ENCODE measurements at regions of chr2 and their contacts with region 1.

Region 1: GRCh38 chr2:7427293-7428060 is 510.3 kb downstream of the RNF144A start:
- DNase-seq: peak in 6 of 14 experiments; percentile 5 to 81 (median 58)
- ATAC-seq: peak; percentile 60
- H3K4me3 ChIP-seq: no peak overlapping the region
- H3K4me3 Mint-ChIP-seq: no peak overlapping the region
- H3K27ac ChIP-seq: no peak overlapping the region
- H3K27ac Mint-ChIP-seq: peak overlapping the region; percentile 22
- H3K4me1 ChIP-seq: peaks cover 36% of the 10 kb centered on the region
- H3K4me1 Mint-ChIP-seq: peaks cover 45% of the 10 kb centered on the region
- H3K27me3 ChIP-seq: no peaks in the 10 kb centered on the region
- H3K27me3 Mint-ChIP-seq: no peaks in the 10 kb centered on the region
- CTCF ChIP-seq: peak; percentile 87

Region 2: GRCh38 chr2:7097348-7097895 is 330.1 kb before region 1 on chr2:
- CTCF ChIA-PET with region 1: no interaction called
- POLR2A ChIA-PET with region 1: no interaction called
- intact Hi-C with region 1: loop called in 1 of 2 experiments (anchors 10 kb)
- DNase-seq: peak; percentile 44 to 86 (median 66)
- ATAC-seq: peak; percentile 97
- H3K4me3 ChIP-seq: peak overlapping the region; percentile 6
- H3K4me3 Mint-ChIP-seq: peak overlapping the region; percentile 42
- H3K27ac ChIP-seq: no peak overlapping the region
- H3K27ac Mint-ChIP-seq: no peak overlapping the region
- H3K4me1 ChIP-seq: peaks cover 9% of the 10 kb centered on the region
- H3K4me1 Mint-ChIP-seq: peaks cover 7% of the 10 kb centered on the region
- H3K27me3 ChIP-seq: no peaks in the 10 kb centered on the region
- H3K27me3 Mint-ChIP-seq: no peaks in the 10 kb centered on the region
- CTCF ChIP-seq: peak; percentile 99

Region 3: DNA sequence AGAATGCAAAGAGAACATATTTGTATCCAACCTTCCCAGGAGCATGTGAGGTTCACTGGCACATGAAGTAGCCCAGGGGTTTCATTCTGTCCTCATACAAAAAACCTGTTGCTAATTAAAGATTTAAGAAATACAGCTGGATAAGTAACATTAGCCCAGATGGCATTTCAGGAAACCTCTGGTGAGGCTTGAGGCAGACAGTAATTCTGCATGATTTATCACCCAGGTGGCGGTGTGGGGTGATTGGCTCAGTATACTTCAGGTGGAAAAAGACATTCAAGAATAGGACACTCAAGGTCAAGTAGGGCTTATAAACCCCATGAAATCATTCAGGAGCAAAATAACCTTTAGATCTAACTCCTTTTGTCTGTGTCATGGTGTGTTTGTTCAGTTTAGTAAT is 272.8 kb before region 1 on chr2:
- CTCF ChIA-PET with region 1: no interaction called
- POLR2A ChIA-PET with region 1: no interaction called
- intact Hi-C with region 1: no loop called
- DNase-seq: no peak
- ATAC-seq: no peak
- H3K4me3 ChIP-seq: no peak overlapping the region
- H3K4me3 Mint-ChIP-seq: no peak overlapping the region
- H3K27ac ChIP-seq: no peak overlapping the region
- H3K27ac Mint-ChIP-seq: no peak overlapping the region
- H3K4me1 ChIP-seq: no peaks in the 10 kb centered on the region
- H3K4me1 Mint-ChIP-seq: no peaks in the 10 kb centered on the region
- H3K27me3 ChIP-seq: peaks cover 0 to 3% of the 10 kb centered on the region in 2 experiments
- H3K27me3 Mint-ChIP-seq: no peaks in the 10 kb centered on the region
- CTCF ChIP-seq: no peak

Region 4: DNA sequence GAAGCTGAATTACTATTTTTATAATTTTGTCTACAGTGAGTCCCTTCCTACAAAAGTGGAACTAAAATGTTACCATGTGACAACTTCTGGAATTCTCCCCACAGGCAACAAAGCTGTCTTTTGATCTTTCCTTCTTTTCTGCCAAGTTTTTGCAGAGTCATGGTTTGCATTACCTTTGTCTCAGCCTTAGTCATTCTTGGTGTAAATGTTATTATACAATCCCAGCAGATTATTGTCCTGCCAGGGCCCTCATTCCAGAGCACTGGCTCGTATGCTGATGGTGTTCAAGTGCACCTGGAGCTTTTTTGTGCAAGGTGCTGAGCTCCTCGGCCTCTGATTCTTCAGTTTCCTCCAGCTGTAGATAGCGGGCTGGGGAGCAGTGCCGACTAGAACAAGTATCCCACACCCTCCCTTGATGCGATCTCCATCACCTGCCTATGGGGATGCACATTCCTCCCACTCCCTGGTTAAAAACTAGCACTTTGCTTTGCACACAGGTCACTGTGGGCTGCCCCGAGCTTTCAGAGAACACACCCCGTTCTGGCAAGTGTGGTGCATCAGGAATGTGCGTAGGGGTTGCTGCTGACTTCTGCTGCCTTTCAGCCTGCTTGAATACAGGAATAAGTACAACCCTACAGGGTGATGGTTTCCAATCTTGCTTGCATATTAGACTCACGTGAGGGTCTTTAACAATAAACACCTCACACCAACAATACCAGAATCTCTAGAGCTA is 246.7 kb before region 1 on chr2:
- CTCF ChIA-PET with region 1: no interaction called
- POLR2A ChIA-PET with region 1: no interaction called
- intact Hi-C with region 1: no loop called
- DNase-seq: no peak
- ATAC-seq: no peak
- H3K4me3 ChIP-seq: no peak overlapping the region
- H3K4me3 Mint-ChIP-seq: no peak overlapping the region
- H3K27ac ChIP-seq: no peak overlapping the region
- H3K27ac Mint-ChIP-seq: no peak overlapping the region
- H3K4me1 ChIP-seq: no peaks in the 10 kb centered on the region
- H3K4me1 Mint-ChIP-seq: no peaks in the 10 kb centered on the region
- H3K27me3 ChIP-seq: no peaks in the 10 kb centered on the region
- H3K27me3 Mint-ChIP-seq: no peaks in the 10 kb centered on the region
- CTCF ChIP-seq: no peak

Region 5: GRCh38 chr2:7450188-7450832 is 22.8 kb after region 1 on chr2:
- CTCF ChIA-PET with region 1: no interaction called
- POLR2A ChIA-PET with region 1: interaction called, 6 read pairs
- intact Hi-C with region 1: loop called in 1 of 2 experiments (anchors 2 kb)
- DNase-seq: peak in 7 of 14 experiments; percentile 23 to 76 (median 54)
- ATAC-seq: peak; percentile 81
- H3K4me3 ChIP-seq: no peak overlapping the region
- H3K4me3 Mint-ChIP-seq: peak overlapping the region; percentile 81
- H3K27ac ChIP-seq: peak overlapping the region; percentile 44 to 68
- H3K27ac Mint-ChIP-seq: peak overlapping the region; percentile 89
- H3K4me1 ChIP-seq: peaks cover 54% of the 10 kb centered on the region
- H3K4me1 Mint-ChIP-seq: peaks cover 73% of the 10 kb centered on the region
- H3K27me3 ChIP-seq: no peaks in the 10 kb centered on the region
- H3K27me3 Mint-ChIP-seq: no peaks in the 10 kb centered on the region
- CTCF ChIP-seq: no peak

Region 6: DNA sequence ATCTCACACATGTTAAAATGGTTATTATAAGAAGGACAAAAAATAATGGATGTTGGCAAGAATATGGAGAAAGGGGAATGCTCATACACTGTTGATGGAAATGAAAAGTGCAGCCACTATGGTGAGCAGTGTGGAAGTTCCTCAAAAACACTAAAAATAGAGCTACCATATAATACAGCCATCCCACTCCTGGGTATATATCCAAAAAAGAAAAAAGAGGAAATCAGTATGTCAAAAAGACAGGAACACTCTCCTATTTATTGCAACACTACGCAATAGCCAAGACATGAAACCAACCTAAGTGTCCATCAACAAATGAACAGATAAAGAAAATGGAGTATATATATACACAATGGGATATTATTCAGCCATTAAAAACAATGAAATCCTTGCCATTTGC is 132.3 kb after region 1 on chr2:
- CTCF ChIA-PET with region 1: no interaction called
- POLR2A ChIA-PET with region 1: no interaction called
- intact Hi-C with region 1: loop called (anchors 5 to 10 kb)
- DNase-seq: no peak
- ATAC-seq: no peak
- H3K4me3 ChIP-seq: no peak overlapping the region
- H3K4me3 Mint-ChIP-seq: no peak overlapping the region
- H3K27ac ChIP-seq: no peak overlapping the region
- H3K27ac Mint-ChIP-seq: no peak overlapping the region
- H3K4me1 ChIP-seq: no peaks in the 10 kb centered on the region
- H3K4me1 Mint-ChIP-seq: no peaks in the 10 kb centered on the region
- H3K27me3 ChIP-seq: no peaks in the 10 kb centered on the region
- H3K27me3 Mint-ChIP-seq: no peaks in the 10 kb centered on the region
- CTCF ChIP-seq: no peak

Region 7: DNA sequence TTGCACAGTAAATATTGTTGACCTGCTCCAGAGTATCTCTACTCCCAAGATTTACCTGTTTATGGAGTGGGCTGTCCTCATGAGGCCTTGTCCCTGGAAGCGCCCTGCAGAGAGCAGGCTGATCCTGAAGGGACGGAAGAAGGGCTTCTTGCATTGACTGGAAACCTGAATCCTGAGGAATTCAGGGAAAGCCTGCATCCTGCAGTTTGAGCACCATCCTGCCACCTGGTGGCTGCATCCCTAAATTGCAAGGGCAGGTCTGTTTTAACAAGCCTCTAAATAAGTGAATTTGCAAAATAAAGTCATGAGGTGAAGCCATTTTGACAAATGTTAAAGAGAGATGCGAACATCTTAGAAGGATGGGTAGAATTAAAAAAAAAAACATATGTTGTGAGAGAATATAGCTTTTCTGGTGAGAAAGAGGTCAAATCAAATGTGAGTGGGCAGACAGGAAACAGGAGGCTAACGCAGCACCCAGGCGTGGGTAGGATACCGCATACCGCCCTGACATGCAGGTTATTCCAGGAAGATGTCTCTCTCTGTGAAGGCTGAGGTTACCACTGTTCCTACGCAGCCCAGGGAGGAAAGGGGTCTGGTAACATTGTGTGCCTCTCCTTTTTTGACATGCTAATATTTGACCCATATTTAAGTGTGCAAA is 244.7 kb after region 1 on chr2:
- CTCF ChIA-PET with region 1: interaction called, 3 read pairs
- POLR2A ChIA-PET with region 1: no interaction called
- intact Hi-C with region 1: loop called (anchors 1 to 2 kb)
- DNase-seq: peak; percentile 5 to 75 (median 39)
- ATAC-seq: peak; percentile 44
- H3K4me3 ChIP-seq: no peak overlapping the region
- H3K4me3 Mint-ChIP-seq: peak overlapping the region; percentile 57
- H3K27ac ChIP-seq: no peak overlapping the region
- H3K27ac Mint-ChIP-seq: peak overlapping the region; percentile 69
- H3K4me1 ChIP-seq: peaks cover 25% of the 10 kb centered on the region
- H3K4me1 Mint-ChIP-seq: peaks cover 32% of the 10 kb centered on the region
- H3K27me3 ChIP-seq: no peaks in the 10 kb centered on the region
- H3K27me3 Mint-ChIP-seq: no peaks in the 10 kb centered on the region
- CTCF ChIP-seq: peak; percentile 74

Region 8: DNA sequence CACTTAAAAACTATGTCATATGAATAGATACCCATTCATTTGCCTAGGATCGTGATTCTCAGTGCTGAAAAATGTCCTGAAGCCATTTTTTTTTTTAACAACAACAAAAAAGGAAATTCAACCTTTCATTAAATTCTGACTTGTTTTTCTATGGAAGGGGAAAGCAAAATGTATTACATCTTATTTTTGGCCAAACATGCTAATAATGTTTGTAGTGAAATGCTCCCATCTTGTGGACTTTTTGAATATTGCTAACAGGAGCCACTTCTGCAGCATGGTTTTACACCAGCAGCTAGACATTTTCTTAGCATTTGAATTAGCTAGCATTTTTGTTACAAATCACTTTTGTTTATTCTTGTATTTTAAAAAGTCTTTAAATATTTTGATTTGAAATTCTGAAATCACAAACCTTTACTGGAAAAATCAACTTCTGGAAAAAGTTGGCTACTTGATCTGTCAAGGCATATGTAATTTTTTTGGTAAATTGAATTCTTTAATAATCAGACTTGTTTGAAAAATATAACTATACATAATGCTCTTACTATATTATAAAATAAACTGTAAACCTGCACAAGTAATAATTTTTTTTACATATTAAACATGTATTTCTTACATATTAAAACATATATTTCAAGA is 1334.2 kb after region 1 on chr2:
- CTCF ChIA-PET with region 1: no interaction called
- POLR2A ChIA-PET with region 1: no interaction called
- intact Hi-C with region 1: loop called in 1 of 2 experiments (anchors 2 kb)
- DNase-seq: peak in 3 of 14 experiments; percentile 22 to 29 (median 27)
- ATAC-seq: no peak
- H3K4me3 ChIP-seq: no peak overlapping the region
- H3K4me3 Mint-ChIP-seq: no peak overlapping the region
- H3K27ac ChIP-seq: no peak overlapping the region
- H3K27ac Mint-ChIP-seq: no peak overlapping the region
- H3K4me1 ChIP-seq: no peaks in the 10 kb centered on the region
- H3K4me1 Mint-ChIP-seq: peaks cover 5% of the 10 kb centered on the region
- H3K27me3 ChIP-seq: no peaks in the 10 kb centered on the region
- H3K27me3 Mint-ChIP-seq: no peaks in the 10 kb centered on the region
- CTCF ChIP-seq: peak; percentile 12